ENCODE measurements at regions of chr10 and their contacts with region 1.

Region 1: DNA sequence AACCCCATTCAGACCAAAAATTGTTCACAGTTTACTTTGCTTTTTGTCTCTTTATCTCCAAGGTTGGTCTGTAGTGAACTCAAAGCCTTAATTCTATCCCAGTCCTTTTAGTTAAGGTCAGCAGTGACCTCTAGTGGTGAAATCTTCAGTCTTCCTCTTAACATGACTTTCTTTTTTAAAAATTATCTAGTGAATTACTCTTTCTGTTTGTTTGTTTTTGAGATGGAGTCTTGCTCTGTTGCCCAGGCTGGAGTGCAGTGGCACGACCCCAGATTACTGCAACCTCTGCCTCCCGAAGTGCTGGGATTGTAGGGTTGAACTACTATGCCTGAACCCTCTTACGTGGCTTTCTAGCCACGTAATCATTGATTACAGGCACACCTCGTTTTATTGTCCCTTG is 25.0 kb downstream of the ZNF487 start:
- DNase-seq: peak in 1 of 2 donors; percentile 92
- H3K4me3 ChIP-seq: peak overlapping the region in 1 of 4 donors; percentile 34
- H3K27ac ChIP-seq: no peak overlapping the region
- H3K4me1 ChIP-seq: peaks cover 0 to 4% (median 2%) of the 10 kb centered on the region in 4 donors
- H3K27me3 ChIP-seq: no peaks in the 10 kb centered on the region
- CTCF ChIP-seq: peak in 5 of 7 experiments; percentile 49 to 77 (median 67)
- EP300 ChIP-seq: no peak
- POLR2A ChIP-seq: no peak

Region 2: GRCh38 chr10:42933448-42934340 is 528.3 kb before region 1 on chr10:
- intact Hi-C with region 1: no loop called
- DNase-seq: peak; percentile 65 to 90
- H3K4me3 ChIP-seq: peak overlapping the region; percentile 12 to 41 (median 30)
- H3K27ac ChIP-seq: no peak overlapping the region
- H3K4me1 ChIP-seq: peaks cover 15 to 18% (median 18%) of the 10 kb centered on the region in 4 donors
- H3K27me3 ChIP-seq: peaks cover 12 to 66% (median 24%) of the 10 kb centered on the region in 3 donors
- CTCF ChIP-seq: no peak
- EP300 ChIP-seq: no peak
- POLR2A ChIP-seq: no peak

Region 3: GRCh38 chr10:43234471-43235041 is 227.4 kb before region 1 on chr10:
- intact Hi-C with region 1: no loop called
- DNase-seq: no peak
- H3K4me3 ChIP-seq: no peak overlapping the region
- H3K27ac ChIP-seq: no peak overlapping the region
- H3K4me1 ChIP-seq: peaks cover 2 to 11% (median 9%) of the 10 kb centered on the region in 4 donors
- H3K27me3 ChIP-seq: peaks cover 7 to 48% (median 24%) of the 10 kb centered on the region in 3 donors
- CTCF ChIP-seq: no peak
- EP300 ChIP-seq: no peak
- POLR2A ChIP-seq: no peak

Region 4: GRCh38 chr10:43287056-43288007 is 174.6 kb before region 1 on chr10:
- intact Hi-C with region 1: no loop called
- DNase-seq: peak; percentile 69 to 72
- H3K4me3 ChIP-seq: no peak overlapping the region
- H3K27ac ChIP-seq: peak overlapping the region in 2 of 5 donors; percentile 66 to 71
- H3K4me1 ChIP-seq: peaks cover 0 to 14% (median 7%) of the 10 kb centered on the region in 4 donors
- H3K27me3 ChIP-seq: peaks cover 0 to 53% (median 12%) of the 10 kb centered on the region in 3 donors
- CTCF ChIP-seq: no peak
- EP300 ChIP-seq: no peak
- POLR2A ChIP-seq: no peak

Region 5: DNA sequence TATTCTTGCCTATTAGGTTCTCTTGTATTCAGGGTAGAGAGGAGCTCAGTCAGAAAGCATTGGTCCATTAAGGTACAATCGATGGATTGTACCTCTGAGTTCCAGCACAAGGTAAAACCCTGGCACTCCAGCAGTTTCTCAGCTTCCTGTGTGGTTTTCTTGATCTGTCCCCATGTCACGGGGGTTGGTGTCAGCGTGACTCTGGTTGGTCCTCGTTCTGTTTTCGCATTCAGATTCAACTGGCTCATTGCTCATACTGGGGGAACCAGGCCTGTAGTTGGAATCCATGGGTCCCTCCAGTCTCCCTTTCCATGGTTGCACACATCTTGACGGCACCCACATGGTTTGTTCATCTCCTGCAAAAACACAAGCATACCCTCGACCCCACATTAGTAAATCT is 162.4 kb before region 1 on chr10:
- intact Hi-C with region 1: loop called (anchors 5 kb)
- DNase-seq: no peak
- H3K4me3 ChIP-seq: no peak overlapping the region
- H3K27ac ChIP-seq: no peak overlapping the region
- H3K4me1 ChIP-seq: peaks cover 0 to 8% (median 6%) of the 10 kb centered on the region in 4 donors
- H3K27me3 ChIP-seq: peaks cover 0 to 36% (median 10%) of the 10 kb centered on the region in 3 donors
- CTCF ChIP-seq: no peak
- EP300 ChIP-seq: no peak
- POLR2A ChIP-seq: no peak

Region 6: GRCh38 chr10:43574001-43574892 is 112.3 kb after region 1 on chr10 and contains the start of gene ZNF239:
- intact Hi-C with region 1: loop called (anchors 10 kb)
- DNase-seq: peak; percentile 87 to 97
- H3K4me3 ChIP-seq: peak within 1 kb of the TSS; percentile 59 to 84 (median 68)
- H3K27ac ChIP-seq: peak within 1 kb of the TSS; percentile 59 to 82 (median 81)
- H3K4me1 ChIP-seq: peaks cover 0 to 24% (median 23%) of the 10 kb centered on the region in 4 donors
- H3K27me3 ChIP-seq: no peaks in the 10 kb centered on the region
- CTCF ChIP-seq: no peak
- EP300 ChIP-seq: no peak
- POLR2A ChIP-seq: no peak
- total RNA-seq, gene ZNF239: 4.0 to 37.5 (median 5.2) TPM in 3 of 5 donors, not detected in the others